ENCODE measurements at regions of chr17 and their contacts with region 1.

Region 1: GRCh38 chr17:61389670-61390478 is 9.8 kb upstream of the TBX2 start:
- DNase-seq: peak; percentile 59
- H3K4me3 ChIP-seq: no peak overlapping the region
- H3K27ac ChIP-seq: no peak overlapping the region
- H3K4me1 ChIP-seq: no peaks in the 10 kb centered on the region
- H3K27me3 ChIP-seq: no peaks in the 10 kb centered on the region

Region 2: GRCh38 chr17:60720763-60721531 is 668.9 kb before region 1 on chr17:
- in situ Hi-C with region 1: loop called (anchors 25 kb)
- DNase-seq: peak; percentile 76
- H3K4me3 ChIP-seq: no peak overlapping the region
- H3K27ac ChIP-seq: no peak overlapping the region
- H3K4me1 ChIP-seq: peaks cover 13% of the 10 kb centered on the region
- H3K27me3 ChIP-seq: no peaks in the 10 kb centered on the region

Region 3: DNA sequence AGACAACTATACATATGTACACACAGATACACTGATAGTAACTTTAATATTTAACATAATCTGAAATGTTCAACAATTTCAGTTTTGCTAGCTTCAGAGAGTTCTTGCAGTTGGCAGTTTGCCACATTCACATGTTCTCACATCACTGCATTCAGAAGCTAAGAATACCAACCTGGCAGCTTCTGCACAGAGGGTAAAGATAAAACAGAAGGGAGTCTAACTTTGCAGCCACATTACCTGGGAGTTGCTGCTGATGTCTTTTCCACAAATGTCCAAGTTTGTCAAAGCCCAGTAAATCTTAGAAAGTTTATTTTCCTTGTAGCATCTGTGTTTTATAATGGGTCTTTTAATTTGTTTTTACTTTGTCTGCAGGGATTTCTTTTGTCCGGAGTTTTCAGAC is 380.2 kb before region 1 on chr17:
- in situ Hi-C with region 1: loop called (anchors 10 kb)
- DNase-seq: peak; percentile 7
- H3K4me3 ChIP-seq: no peak overlapping the region
- H3K27ac ChIP-seq: no peak overlapping the region
- H3K4me1 ChIP-seq: no peaks in the 10 kb centered on the region
- H3K27me3 ChIP-seq: no peaks in the 10 kb centered on the region

Region 4: GRCh38 chr17:61325382-61326073 is 64.3 kb before region 1 on chr17:
- in situ Hi-C with region 1: no loop called
- DNase-seq: peak; percentile 91
- H3K4me3 ChIP-seq: no peak overlapping the region
- H3K27ac ChIP-seq: peak overlapping the region; percentile 58
- H3K4me1 ChIP-seq: peaks cover 23% of the 10 kb centered on the region
- H3K27me3 ChIP-seq: no peaks in the 10 kb centered on the region